ENCODE measurements at regions of chr1 and their contacts with region 1.

Region 1: GRCh38 chr1:215282557-215282956 is 200.0 kb downstream of the KCNK2 start:
- DNase-seq: peak; percentile 39
- H3K4me3 ChIP-seq: no peak overlapping the region
- H3K27ac ChIP-seq: peak overlapping the region; percentile 56
- H3K4me1 ChIP-seq: peaks cover 20% of the 10 kb centered on the region
- H3K27me3 ChIP-seq: no peaks in the 10 kb centered on the region
- CTCF ChIP-seq: no peak
- POLR2A ChIP-seq: peak; percentile 42

Region 2: GRCh38 chr1:215263636-215264035 is 18.9 kb before region 1 on chr1:
- CTCF ChIA-PET with region 1: no interaction called
- POLR2A ChIA-PET with region 1: no interaction called
- dilution Hi-C with region 1: no loop called
- intact Hi-C with region 1: no loop called
- DNase-seq: no peak
- H3K4me3 ChIP-seq: no peak overlapping the region
- H3K27ac ChIP-seq: no peak overlapping the region
- H3K4me1 ChIP-seq: no peaks in the 10 kb centered on the region
- H3K27me3 ChIP-seq: peaks cover 0 to 2% of the 10 kb centered on the region in 2 experiments
- CTCF ChIP-seq: no peak
- POLR2A ChIP-seq: no peak

Region 3: DNA sequence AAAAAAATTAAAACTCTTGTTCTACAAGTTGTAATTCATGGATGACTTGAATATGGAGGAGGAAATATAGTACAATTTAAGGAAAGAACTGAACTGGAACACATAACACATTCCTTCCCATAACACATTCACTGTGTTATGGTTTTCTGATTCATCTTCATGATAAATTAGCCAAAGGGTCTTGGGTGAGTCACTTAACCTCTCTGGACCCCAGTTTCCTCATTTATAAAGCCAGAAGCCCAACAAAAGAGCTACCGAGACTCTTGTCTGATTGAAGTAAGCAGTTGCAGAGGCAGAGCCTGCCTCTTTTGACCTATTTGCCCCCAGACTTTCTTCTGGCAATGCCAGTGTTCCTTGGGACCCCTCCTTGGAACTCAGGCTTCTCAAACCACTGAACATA is 122.7 kb after region 1 on chr1:
- CTCF ChIA-PET with region 1: no interaction called
- POLR2A ChIA-PET with region 1: no interaction called
- dilution Hi-C with region 1: no loop called
- intact Hi-C with region 1: loop called (anchors 5 kb)
- DNase-seq: peak; percentile 87
- H3K4me3 ChIP-seq: no peak overlapping the region
- H3K27ac ChIP-seq: no peak overlapping the region
- H3K4me1 ChIP-seq: peaks cover 10% of the 10 kb centered on the region
- H3K27me3 ChIP-seq: no peaks in the 10 kb centered on the region
- CTCF ChIP-seq: no peak
- POLR2A ChIP-seq: no peak

Region 4: GRCh38 chr1:215418869-215419447 is 136.4 kb after region 1 on chr1:
- CTCF ChIA-PET with region 1: no interaction called
- POLR2A ChIA-PET with region 1: no interaction called
- dilution Hi-C with region 1: no loop called
- intact Hi-C with region 1: no loop called
- DNase-seq: peak; percentile 6
- H3K4me3 ChIP-seq: no peak overlapping the region
- H3K27ac ChIP-seq: no peak overlapping the region
- H3K4me1 ChIP-seq: no peaks in the 10 kb centered on the region
- H3K27me3 ChIP-seq: no peaks in the 10 kb centered on the region
- CTCF ChIP-seq: no peak
- POLR2A ChIP-seq: no peak

Region 5: GRCh38 chr1:215566556-215567490 is 284.3 kb after region 1 on chr1 and contains the start of gene KCTD3:
- CTCF ChIA-PET with region 1: no interaction called
- POLR2A ChIA-PET with region 1: no interaction called
- dilution Hi-C with region 1: no loop called
- intact Hi-C with region 1: loop called (anchors 5 kb)
- DNase-seq: peak; percentile 74
- H3K4me3 ChIP-seq: peak within 1 kb of the TSS; percentile 29 to 94 (median 85)
- H3K27ac ChIP-seq: peak within 1 kb of the TSS; percentile 91
- H3K4me1 ChIP-seq: peaks cover 20% of the 10 kb centered on the region
- H3K27me3 ChIP-seq: no peaks in the 10 kb centered on the region
- CTCF ChIP-seq: no peak
- POLR2A ChIP-seq: peak; percentile 63
- total RNA-seq, gene KCTD3: 28.3 and 31.1 TPM in 2 replicates